K562 (cell line): ENCODE measurements at regions of chr6 and their contacts with region 1.

Region 1: DNA sequence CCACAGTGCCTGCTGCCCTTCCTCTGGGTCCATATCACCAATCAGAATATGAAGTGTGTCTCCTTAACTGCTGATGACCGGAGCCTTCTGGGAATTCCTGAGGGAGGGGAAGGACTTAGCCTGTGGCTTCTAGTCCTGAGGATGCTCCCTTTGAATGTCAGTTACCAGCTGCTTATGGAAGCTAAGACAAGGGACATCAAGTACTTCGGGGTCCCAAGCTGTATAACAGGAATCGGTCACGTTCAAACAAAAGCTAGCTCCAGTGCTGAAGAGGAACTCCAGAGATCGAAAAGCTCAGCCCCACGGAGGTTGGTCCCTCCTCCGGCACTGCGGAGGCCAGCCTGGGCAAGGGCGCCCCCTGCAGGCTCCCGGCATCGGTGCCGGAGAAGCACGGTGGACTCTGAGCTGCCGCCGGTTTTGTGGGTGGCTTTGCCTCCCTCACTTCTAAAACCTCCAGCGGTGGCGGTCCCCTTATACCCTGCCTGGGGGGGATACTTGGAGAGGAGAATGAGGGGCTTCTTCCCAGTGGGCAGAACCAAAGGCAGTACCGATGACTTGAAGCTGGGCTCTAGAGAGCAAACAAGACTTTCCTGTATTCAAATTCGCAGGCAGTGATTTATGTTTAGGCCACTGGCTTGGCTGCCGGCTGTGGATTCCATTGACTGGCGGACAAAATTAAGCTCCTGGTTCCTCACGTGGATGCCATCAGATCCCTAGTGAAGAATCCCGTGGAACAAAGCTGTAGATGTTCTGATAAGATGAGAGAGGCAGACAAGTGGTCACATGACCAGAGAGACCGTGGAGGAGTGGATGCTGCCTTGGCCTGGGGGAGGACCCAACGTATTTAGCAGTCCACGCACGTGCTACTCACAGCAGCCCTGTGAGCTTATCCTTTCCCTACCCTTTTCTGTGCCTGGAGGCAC is 16.2 kb upstream of the UBR2 start:
- DNase-seq: peak; percentile 83 to 93 (median 92)
- ATAC-seq: peak; percentile 100
- H3K4me3 ChIP-seq: peak overlapping the region; percentile 17
- H3K27ac ChIP-seq: no peak overlapping the region
- H3K4me1 ChIP-seq: peaks cover 5 to 12% of the 10 kb centered on the region in 2 experiments; a peak in 3 of 5 replicates
- H3K27me3 ChIP-seq: peaks cover 0 to 4% of the 10 kb centered on the region in 2 experiments; a peak in 1 of 5 replicates
- CTCF ChIP-seq: peak; percentile 95 to 99 (median 99)
- EP300 ChIP-seq: peak; percentile 46; the same call in 1 of the 2 replicates
- POLR2A ChIP-seq: no peak
- RAD21 ChIP-seq: peak; percentile 95 to 96

Region 2: GRCh38 chr6:42260972-42261371 is 286.7 kb before region 1 on chr6:
- CTCF ChIA-PET with region 1: interaction called, 3 read pairs
- POLR2A ChIA-PET with region 1: no interaction called
- in situ Hi-C with region 1: no loop called
- intact Hi-C with region 1: loop called (anchors 5 kb)
- DNase-seq: peak; percentile 57 to 82 (median 81)
- ATAC-seq: peak; percentile 90
- H3K4me3 ChIP-seq: no peak overlapping the region
- H3K27ac ChIP-seq: no peak overlapping the region
- H3K4me1 ChIP-seq: peaks cover 9 to 21% of the 10 kb centered on the region in 2 experiments
- H3K27me3 ChIP-seq: peaks cover 38 to 47% of the 10 kb centered on the region in 2 experiments
- CTCF ChIP-seq: peak; percentile 49 to 73 (median 54)
- EP300 ChIP-seq: no peak
- POLR2A ChIP-seq: no peak
- RAD21 ChIP-seq: peak; percentile 44 to 63

Region 3: GRCh38 chr6:42315991-42316378 is 231.7 kb before region 1 on chr6:
- CTCF ChIA-PET with region 1: interaction called, 4 read pairs
- POLR2A ChIA-PET with region 1: no interaction called
- in situ Hi-C with region 1: loop called (anchors 25 kb)
- intact Hi-C with region 1: no loop called
- DNase-seq: peak in 2 of 4 experiments; percentile 33 to 47
- ATAC-seq: peak; percentile 68
- H3K4me3 ChIP-seq: no peak overlapping the region
- H3K27ac ChIP-seq: no peak overlapping the region
- H3K4me1 ChIP-seq: peaks cover 0 to 14% of the 10 kb centered on the region in 2 experiments; a peak in 3 of 5 replicates
- H3K27me3 ChIP-seq: peaks cover 22 to 38% of the 10 kb centered on the region in 2 experiments
- CTCF ChIP-seq: no peak
- EP300 ChIP-seq: no peak
- POLR2A ChIP-seq: no peak
- RAD21 ChIP-seq: no peak

Region 4: DNA sequence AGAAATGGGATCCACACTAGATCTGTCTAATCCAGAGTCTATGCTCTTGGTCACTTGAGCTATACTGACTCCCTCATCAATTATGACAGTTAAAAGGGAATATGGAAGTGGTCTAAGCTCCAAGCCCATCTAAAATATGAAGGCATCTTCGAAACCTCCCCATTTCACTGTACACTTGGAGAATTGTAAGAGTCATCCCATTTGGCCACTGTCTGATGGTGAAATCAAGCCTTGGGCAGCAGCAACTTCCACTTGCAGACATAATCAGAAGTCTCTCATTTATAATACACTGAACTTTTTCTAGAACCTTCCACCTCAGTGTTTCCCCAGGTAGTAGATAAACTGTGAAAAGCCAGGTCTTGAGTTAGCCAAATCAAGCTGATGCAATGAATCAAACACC is 10.1 kb before region 1 on chr6:
- CTCF ChIA-PET with region 1: interaction called, 3 read pairs
- POLR2A ChIA-PET with region 1: interaction called, 16 read pairs
- in situ Hi-C with region 1: no loop called
- intact Hi-C with region 1: no loop called
- DNase-seq: no peak
- ATAC-seq: no peak
- H3K4me3 ChIP-seq: no peak overlapping the region
- H3K27ac ChIP-seq: no peak overlapping the region
- H3K4me1 ChIP-seq: no peaks in the 10 kb centered on the region
- H3K27me3 ChIP-seq: peaks cover 14 to 16% of the 10 kb centered on the region in 2 experiments; a peak in 4 of 5 replicates
- CTCF ChIP-seq: no peak
- EP300 ChIP-seq: no peak
- POLR2A ChIP-seq: no peak
- RAD21 ChIP-seq: no peak

Region 5: GRCh38 chr6:42563697-42564505 is 16.2 kb after region 1 on chr6 and contains the start of gene UBR2:
- CTCF ChIA-PET with region 1: interaction called, 6 read pairs
- POLR2A ChIA-PET with region 1: interaction called, 15 read pairs
- in situ Hi-C with region 1: no loop called
- intact Hi-C with region 1: no loop called
- DNase-seq: peak; percentile 91 to 100 (median 94)
- ATAC-seq: peak; percentile 95
- H3K4me3 ChIP-seq: peak within 1 kb of the TSS; percentile 61
- H3K27ac ChIP-seq: peak within 1 kb of the TSS; percentile 84
- H3K4me1 ChIP-seq: peaks cover 4% of the 10 kb centered on the region in 2 experiments; a peak in 4 of 5 replicates
- H3K27me3 ChIP-seq: no peaks in the 10 kb centered on the region
- CTCF ChIP-seq: peak; percentile 42 to 67 (median 61)
- EP300 ChIP-seq: peak; percentile 63; the same call in 1 of the 2 replicates
- POLR2A ChIP-seq: peak; percentile 95
- RAD21 ChIP-seq: 0 out of 4 replicates have a peak, but pooled peaks of 1 of the 2 experiments have one; percentile 3
- polyA plus RNA-seq, gene UBR2: 9.1 to 13.1 TPM

Region 6: DNA sequence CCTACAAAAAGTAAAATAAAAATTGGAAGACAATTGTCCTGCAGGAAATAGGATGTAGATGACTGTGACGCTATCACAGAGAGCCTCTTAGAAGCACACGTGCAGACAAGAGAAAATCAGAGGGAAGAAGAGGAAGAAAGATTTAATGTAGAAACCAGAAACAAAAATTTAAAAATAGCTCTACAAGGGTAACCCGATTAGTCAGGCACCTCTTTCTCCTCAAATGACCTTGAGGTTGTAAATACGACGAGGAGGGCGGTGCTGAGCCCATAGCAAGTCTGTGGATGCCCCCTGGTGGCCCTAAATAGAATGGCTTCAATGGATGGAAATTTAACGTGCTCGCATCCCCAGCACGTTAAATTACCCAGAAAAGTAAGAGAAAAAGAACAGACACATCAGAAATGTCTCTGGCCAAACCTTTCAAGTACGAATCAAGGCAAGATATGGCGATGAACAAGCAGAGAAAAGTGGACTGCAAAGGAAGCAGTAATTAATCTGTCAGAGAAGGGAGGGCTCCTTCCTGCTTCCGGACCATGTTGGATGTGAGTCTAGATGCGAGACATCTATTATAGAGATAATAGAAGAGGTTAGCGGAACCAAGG is 178.9 kb after region 1 on chr6:
- CTCF ChIA-PET with region 1: no interaction called
- POLR2A ChIA-PET with region 1: interaction called, 3 read pairs
- in situ Hi-C with region 1: no loop called
- intact Hi-C with region 1: loop called (anchors 5 kb)
- DNase-seq: peak; percentile 87 to 92 (median 90)
- ATAC-seq: peak; percentile 90
- H3K4me3 ChIP-seq: no peak overlapping the region
- H3K27ac ChIP-seq: no peak overlapping the region
- H3K4me1 ChIP-seq: peaks cover 6 to 8% of the 10 kb centered on the region in 2 experiments; a peak in 4 of 5 replicates
- H3K27me3 ChIP-seq: peaks cover 7 to 11% of the 10 kb centered on the region in 2 experiments
- CTCF ChIP-seq: peak; percentile 94 to 98 (median 98)
- EP300 ChIP-seq: peak; percentile 27; the same call in 1 of the 2 replicates
- POLR2A ChIP-seq: no peak
- RAD21 ChIP-seq: peak; percentile 99